ENCODE measurements at regions of chr17 and their contacts with region 1.

Region 1: DNA sequence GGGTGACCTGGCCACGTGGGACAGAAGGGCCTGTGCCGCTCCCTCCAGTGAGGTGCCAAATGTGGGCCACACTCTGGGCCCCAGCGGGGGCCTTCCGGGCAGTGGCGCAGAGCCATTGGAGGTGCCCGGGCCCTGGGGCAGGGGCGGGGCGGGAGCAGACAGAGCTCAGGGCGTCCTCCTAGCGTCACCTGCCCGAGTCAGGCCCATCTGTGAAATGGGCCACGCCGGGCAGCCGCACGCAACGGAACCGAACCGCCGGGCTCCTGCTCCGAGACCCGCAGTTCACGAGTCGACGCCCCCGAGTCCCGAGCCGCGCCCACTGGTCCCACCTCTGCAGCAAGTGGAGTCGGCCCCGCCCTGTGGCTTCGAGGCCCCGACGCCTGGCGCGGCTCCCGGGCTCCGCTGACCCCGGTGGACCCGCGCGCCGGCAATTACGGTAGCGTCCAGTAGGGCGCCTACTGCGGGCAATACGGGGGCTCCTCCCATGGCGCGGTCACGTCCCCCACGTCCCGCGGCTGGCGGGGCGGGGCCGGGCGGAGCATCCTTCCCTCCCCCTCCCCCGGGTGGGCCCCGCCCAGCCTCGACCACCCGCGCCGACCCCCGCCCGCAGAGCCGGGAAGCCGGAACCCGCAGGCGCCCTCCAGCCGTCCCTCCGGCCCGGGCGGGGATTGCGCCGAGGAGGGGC is 1.9 kb downstream of the SLC16A3 start:
- DNase-seq: peak; percentile 77
- H3K4me3 ChIP-seq: peak overlapping the region in 1 of 2 experiments; percentile 62; a peak in 2 of 4 replicates
- H3K27ac ChIP-seq: no peak overlapping the region
- H3K4me1 ChIP-seq: peaks cover 5 to 6% of the 10 kb centered on the region in 2 experiments; a peak in 2 of 4 replicates
- H3K27me3 ChIP-seq: no peaks in the 10 kb centered on the region
- CTCF ChIP-seq: no peak
- EP300 ChIP-seq: no peak
- RAD21 ChIP-seq: no peak

Region 2: GRCh38 chr17:82219838-82220237 is 10.9 kb before region 1 on chr17:
- CTCF ChIA-PET with region 1: interaction called, 45 read pairs
- POLR2A ChIA-PET with region 1: interaction called, 3 read pairs
- DNase-seq: peak; percentile 22
- H3K4me3 ChIP-seq: no peak overlapping the region
- H3K27ac ChIP-seq: no peak overlapping the region
- H3K4me1 ChIP-seq: peaks cover 27 to 34% of the 10 kb centered on the region in 2 experiments
- H3K27me3 ChIP-seq: no peaks in the 10 kb centered on the region
- CTCF ChIP-seq: no peak
- EP300 ChIP-seq: no peak
- RAD21 ChIP-seq: no peak